Caco-2 (cell line): ENCODE measurements at regions of chr19 and their contacts with region 1.

Region 1: DNA sequence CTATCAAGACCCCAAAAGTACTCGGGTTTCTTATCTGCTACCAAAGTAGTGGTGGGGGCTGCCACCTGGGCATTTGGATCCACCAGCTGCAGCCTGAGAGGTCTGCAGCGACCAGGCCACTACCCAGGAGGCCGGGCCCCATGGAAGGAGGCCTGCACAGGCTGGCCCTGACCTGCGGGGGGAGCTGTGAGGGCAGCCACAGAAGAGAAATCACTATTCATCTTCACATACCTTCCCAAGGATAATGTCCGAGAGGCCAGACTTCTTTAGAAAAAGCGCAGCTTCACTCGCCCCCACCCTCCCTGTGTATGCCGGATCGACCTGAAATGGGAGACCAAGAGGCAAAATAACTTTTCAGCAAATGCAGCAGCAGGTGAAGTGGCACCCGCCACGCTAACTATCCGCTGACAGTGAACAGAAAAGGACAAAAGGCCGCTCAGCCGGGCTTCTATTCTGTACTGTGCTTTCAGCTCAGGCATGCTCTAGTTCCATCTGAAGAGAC is 30.1 kb downstream of the EPS15L1 start:
- DNase-seq: peak in 1 of 2 experiments; percentile 72
- H3K4me3 ChIP-seq: no peak overlapping the region
- H3K4me3 Mint-ChIP-seq: no peak overlapping the region
- H3K27ac Mint-ChIP-seq: no peak overlapping the region
- H3K4me1 ChIP-seq: peaks cover 14% of the 10 kb centered on the region
- H3K4me1 Mint-ChIP-seq: peaks cover 27% of the 10 kb centered on the region
- H3K27me3 ChIP-seq: no peaks in the 10 kb centered on the region
- H3K27me3 Mint-ChIP-seq: no peaks in the 10 kb centered on the region
- CTCF ChIP-seq: peak; percentile 63 to 71

Region 2: GRCh38 chr19:16514383-16515019 is 72.8 kb after region 1 on chr19:
- CTCF ChIA-PET with region 1: interaction called, 6 read pairs
- POLR2A ChIA-PET with region 1: no interaction called
- intact Hi-C with region 1: loop called (anchors 2 kb)
- DNase-seq: peak in 1 of 2 experiments; percentile 24
- H3K4me3 ChIP-seq: no peak overlapping the region
- H3K4me3 Mint-ChIP-seq: no peak overlapping the region
- H3K27ac Mint-ChIP-seq: no peak overlapping the region
- H3K4me1 ChIP-seq: no peaks in the 10 kb centered on the region
- H3K4me1 Mint-ChIP-seq: no peaks in the 10 kb centered on the region
- H3K27me3 ChIP-seq: no peaks in the 10 kb centered on the region
- H3K27me3 Mint-ChIP-seq: no peaks in the 10 kb centered on the region
- CTCF ChIP-seq: peak in 1 of 2 experiments; percentile 13

Region 3: DNA sequence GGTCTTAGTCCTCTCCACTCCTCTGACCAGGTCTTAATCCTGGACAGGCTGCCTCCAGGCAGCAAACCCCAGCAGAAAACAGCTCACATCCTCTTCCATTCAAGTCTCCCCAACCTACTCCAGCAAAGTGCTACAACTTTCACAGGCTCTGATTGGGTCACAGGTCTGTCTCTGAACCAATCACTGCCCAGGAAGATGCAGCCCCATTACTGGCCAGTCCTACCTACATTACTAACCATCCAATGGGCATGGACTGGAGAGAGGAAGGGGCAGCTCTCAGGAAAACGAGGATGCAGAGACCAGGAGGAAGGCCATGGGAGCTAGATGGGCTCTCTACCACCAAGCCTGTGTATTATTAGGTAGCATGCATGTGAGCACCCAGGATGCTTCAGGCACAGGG is 174.1 kb after region 1 on chr19:
- CTCF ChIA-PET with region 1: no interaction called
- POLR2A ChIA-PET with region 1: no interaction called
- intact Hi-C with region 1: no loop called
- DNase-seq: no peak
- H3K4me3 ChIP-seq: no peak overlapping the region
- H3K4me3 Mint-ChIP-seq: no peak overlapping the region
- H3K27ac Mint-ChIP-seq: no peak overlapping the region
- H3K4me1 ChIP-seq: peaks cover 6% of the 10 kb centered on the region
- H3K4me1 Mint-ChIP-seq: peaks cover 7% of the 10 kb centered on the region
- H3K27me3 ChIP-seq: no peaks in the 10 kb centered on the region
- H3K27me3 Mint-ChIP-seq: no peaks in the 10 kb centered on the region
- CTCF ChIP-seq: no peak